ENCODE measurements at regions of chr11 and their contacts with region 1.

Region 1: DNA sequence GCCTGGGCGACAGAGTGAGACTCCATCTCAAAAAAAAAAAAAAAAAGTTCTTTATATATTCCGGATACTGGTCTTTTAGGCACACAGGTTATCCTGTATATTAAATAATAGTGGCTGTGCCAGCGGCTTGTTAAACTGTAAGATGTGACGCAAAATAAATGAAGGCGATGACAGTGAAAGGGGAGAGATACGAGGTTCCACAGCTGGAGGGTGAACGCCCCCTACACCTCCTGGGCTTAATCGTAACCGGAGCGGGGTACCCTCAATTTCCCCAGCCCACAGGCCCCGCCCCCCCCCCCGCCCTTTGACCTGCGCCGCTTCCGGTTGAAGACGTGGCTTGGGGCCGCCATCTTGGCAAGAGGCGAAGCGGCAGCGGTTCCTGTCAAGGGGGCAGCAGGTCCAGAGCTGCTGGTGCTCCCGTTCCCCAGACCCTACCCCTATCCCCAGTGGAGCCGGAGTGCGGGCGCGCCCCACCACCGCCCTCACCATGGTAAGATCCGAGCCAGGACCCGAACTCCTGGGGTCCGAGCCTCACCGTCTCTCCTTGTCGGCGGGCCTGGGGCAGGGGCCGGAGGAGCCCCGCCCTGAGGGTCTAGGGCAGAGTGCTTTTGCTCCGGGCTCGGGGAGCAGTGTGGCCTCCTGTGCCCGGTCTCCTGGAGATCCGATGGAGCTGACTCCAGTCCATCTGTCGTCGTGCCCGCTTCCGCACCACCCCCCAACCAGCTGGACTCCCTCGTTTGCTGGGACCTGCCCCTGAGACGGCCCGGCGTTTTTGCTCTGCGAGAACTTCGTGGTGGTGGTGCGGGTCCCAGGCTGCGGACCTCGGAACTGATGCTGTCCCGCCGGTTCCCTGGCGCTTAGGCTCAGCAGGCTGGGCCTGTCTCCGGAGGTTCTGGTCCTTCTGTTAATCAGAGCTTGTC is at the start of gene ARCN1:
- DNase-seq: peak; percentile 58 to 82 (median 79)
- ATAC-seq: peak; percentile 94
- H3K4me3 ChIP-seq: peak within 1 kb of the TSS; percentile 98
- H3K4me3 Mint-ChIP-seq: peak within 1 kb of the TSS; percentile 83 to 99 (median 96)
- H3K27ac ChIP-seq: peak within 1 kb of the TSS; percentile 100
- H3K27ac Mint-ChIP-seq: peak within 1 kb of the TSS; percentile 92 to 98 (median 98)
- H3K4me1 ChIP-seq: peaks cover 26 to 36% of the 10 kb centered on the region in 2 donors
- H3K4me1 Mint-ChIP-seq: peaks cover 35 to 58% (median 50%) of the 10 kb centered on the region in 7 donors
- H3K27me3 ChIP-seq: no peaks in the 10 kb centered on the region
- H3K27me3 Mint-ChIP-seq: no peaks in the 10 kb centered on the region
- total RNA-seq, gene ARCN1: 71.2 to 134 (median 115) TPM

Region 2: DNA sequence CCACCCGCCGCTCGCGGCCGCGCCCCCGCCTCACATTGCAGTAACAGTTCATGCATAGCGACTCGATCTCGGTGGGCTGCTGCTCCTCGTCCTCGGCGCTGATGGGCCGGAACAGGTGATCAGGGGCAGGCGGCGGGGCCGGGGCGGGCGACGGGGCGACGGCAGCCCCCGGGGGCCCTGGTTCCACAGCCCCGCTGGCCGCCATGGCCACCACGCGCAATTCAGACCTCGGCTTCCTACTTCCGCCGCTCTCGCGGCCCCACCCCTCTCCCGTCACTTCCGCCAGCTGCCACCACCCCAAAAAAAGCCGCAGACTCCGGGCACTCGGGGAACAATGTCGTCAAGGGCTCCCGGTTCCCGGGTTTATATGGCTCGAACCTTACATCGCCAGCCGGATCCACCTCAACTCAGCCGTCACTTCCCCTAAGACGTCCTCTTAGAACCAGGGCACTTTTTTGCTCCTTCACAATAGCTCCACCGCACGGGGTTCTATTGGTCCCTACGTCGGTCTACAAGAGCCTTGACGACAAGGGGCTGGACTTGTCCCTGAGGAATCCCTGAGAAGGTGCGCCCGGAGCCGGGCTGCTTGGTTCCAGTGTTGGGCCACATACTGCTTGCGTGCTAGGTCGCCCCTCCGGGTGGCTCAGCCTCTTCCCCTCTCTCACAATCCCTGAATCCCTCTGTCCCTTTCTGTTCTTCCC is 1784.4 kb before region 1 on chr11 and contains the start of gene ZPR1:
- CTCF ChIA-PET with region 1: no interaction called
- POLR2A ChIA-PET with region 1: no interaction called
- intact Hi-C with region 1: no loop called
- DNase-seq: peak; percentile 75 to 88 (median 87)
- ATAC-seq: peak; percentile 92
- H3K4me3 ChIP-seq: peak within 1 kb of the TSS; percentile 79
- H3K4me3 Mint-ChIP-seq: peak within 1 kb of the TSS; percentile 85 to 98 (median 92)
- H3K27ac ChIP-seq: peak within 1 kb of the TSS; percentile 95
- H3K27ac Mint-ChIP-seq: peak within 1 kb of the TSS; percentile 80 to 98 (median 96)
- H3K4me1 ChIP-seq: peaks cover 17 to 24% of the 10 kb centered on the region in 2 donors
- H3K4me1 Mint-ChIP-seq: peaks cover 32 to 57% (median 44%) of the 10 kb centered on the region in 7 donors
- H3K27me3 ChIP-seq: no peaks in the 10 kb centered on the region
- H3K27me3 Mint-ChIP-seq: no peaks in the 10 kb centered on the region
- total RNA-seq, gene ZPR1: 65.8 to 117 (median 68.8) TPM

Region 3: DNA sequence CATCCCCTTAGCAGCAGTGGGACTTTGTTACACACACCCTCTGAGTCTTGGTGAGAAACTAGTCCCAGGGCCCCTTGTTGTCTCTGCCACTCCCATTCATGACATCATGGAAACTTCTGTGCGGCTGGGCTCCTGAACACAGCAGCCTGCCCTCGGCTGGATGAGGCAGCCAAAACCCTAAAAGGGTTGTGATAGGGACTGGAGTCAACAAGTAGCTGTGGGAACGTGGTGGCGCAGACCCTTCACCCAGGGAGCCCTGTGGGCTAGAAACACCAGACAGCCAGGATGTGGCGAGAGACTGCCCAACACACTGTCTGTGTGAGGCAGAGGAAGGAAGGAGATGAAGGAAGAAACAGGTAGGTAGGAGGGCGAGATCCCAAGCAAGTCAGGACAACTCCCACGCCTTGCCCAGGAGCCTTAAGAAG is 233.7 kb before region 1 on chr11:
- CTCF ChIA-PET with region 1: no interaction called
- POLR2A ChIA-PET with region 1: interaction called, 4 read pairs
- intact Hi-C with region 1: loop called in 1 of 2 experiments (anchors 5 kb)
- DNase-seq: peak; percentile 46 to 99 (median 92)
- ATAC-seq: peak; percentile 82
- H3K4me3 ChIP-seq: peak overlapping the region; percentile 88
- H3K4me3 Mint-ChIP-seq: peak overlapping the region; percentile 89 to 98 (median 96)
- H3K27ac ChIP-seq: peak overlapping the region; percentile 96
- H3K27ac Mint-ChIP-seq: peak overlapping the region; percentile 95 to 100 (median 99)
- H3K4me1 ChIP-seq: peaks cover 46 to 50% of the 10 kb centered on the region in 2 donors
- H3K4me1 Mint-ChIP-seq: peaks cover 28 to 68% (median 55%) of the 10 kb centered on the region in 7 donors
- H3K27me3 ChIP-seq: no peaks in the 10 kb centered on the region
- H3K27me3 Mint-ChIP-seq: no peaks in the 10 kb centered on the region

Region 4: DNA sequence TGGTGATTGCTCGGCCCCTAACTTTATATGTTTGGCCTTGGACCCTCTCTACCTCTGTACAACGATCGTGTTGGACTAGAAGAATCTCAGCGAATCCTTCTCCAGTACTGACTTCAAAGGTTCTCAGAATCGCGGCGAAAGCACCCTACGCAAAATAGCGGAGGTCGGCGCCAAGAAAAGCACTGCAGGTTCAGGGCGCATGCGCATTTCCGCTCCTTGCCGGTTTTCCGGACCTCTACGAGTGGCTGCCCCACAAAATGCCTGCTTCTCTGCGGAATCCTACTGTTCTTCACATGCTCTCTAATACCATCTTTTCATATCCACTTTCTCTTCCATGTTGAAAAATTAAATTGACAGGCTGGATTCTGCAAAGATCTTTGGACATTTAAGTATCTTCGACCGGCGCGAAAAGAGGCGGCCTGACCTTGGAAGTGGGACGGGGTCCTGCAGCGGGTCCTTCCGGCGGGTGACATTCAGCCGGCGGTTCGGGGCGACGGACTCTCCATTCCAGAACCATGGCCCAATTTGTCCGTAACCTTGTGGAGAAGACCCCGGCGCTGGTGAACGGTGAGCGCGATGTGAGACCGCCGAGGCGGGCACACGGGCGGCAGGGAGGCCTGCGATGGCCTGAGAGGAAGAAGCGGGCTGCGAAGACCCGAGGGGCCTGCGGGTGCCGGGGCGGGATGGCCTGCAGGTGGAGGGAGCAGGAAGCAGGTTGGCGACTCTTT is 171.0 kb before region 1 on chr11 and contains the start of gene ATP5MG:
- CTCF ChIA-PET with region 1: no interaction called
- POLR2A ChIA-PET with region 1: no interaction called
- intact Hi-C with region 1: loop called (anchors 2 kb)
- DNase-seq: peak; percentile 83 to 96 (median 93)
- ATAC-seq: peak; percentile 71
- H3K4me3 ChIP-seq: peak within 1 kb of the TSS; percentile 79
- H3K4me3 Mint-ChIP-seq: peak within 1 kb of the TSS; percentile 97 to 99 (median 98)
- H3K27ac ChIP-seq: peak within 1 kb of the TSS; percentile 97
- H3K27ac Mint-ChIP-seq: peak within 1 kb of the TSS; percentile 97 to 100 (median 100)
- H3K4me1 ChIP-seq: peaks cover 37 to 58% of the 10 kb centered on the region in 2 donors
- H3K4me1 Mint-ChIP-seq: peaks cover 39 to 78% (median 71%) of the 10 kb centered on the region in 7 donors
- H3K27me3 ChIP-seq: no peaks in the 10 kb centered on the region
- H3K27me3 Mint-ChIP-seq: peaks cover 0 to 2% (median 0%) of the 10 kb centered on the region in 5 donors
- total RNA-seq, gene ATP5MG: 140 to 241 (median 154) TPM

Region 5: DNA sequence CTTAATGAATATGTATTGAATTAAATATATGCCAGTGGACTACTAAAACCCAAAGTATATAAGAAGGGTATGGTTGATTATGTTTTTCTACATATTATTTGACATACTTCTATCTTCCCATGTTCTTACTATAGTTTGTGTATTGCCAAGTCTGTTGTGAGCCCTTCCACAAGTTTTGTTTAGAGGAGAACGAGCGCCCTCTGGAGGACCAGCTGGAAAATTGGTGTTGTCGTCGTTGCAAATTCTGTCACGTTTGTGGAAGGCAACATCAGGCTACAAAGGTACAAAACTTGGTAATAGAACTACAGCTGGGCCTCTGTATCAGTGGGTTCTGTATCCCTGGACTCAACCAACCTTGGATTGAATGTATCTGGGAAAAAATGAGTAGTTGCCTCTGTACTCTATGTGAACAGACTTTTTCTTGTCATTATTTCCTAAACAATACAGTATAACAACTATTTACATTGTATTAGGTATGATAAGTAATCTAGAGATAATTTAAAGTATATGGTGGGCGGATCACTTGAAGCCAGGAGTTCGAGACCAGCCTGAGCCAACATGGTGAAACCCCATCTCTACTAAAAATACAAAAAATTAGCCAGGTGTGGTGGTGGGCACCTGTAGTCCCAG is 83.7 kb before region 1 on chr11:
- CTCF ChIA-PET with region 1: no interaction called
- POLR2A ChIA-PET with region 1: no interaction called
- intact Hi-C with region 1: loop called in 1 of 2 experiments (anchors 2 kb)
- DNase-seq: peak; percentile 66 to 86 (median 80)
- ATAC-seq: peak; percentile 89
- H3K4me3 ChIP-seq: no peak overlapping the region
- H3K4me3 Mint-ChIP-seq: no peak overlapping the region
- H3K27ac ChIP-seq: peak overlapping the region; percentile 53
- H3K27ac Mint-ChIP-seq: peak overlapping the region in 7 of 9 donors; percentile 10 to 89 (median 57)
- H3K4me1 ChIP-seq: no peaks in the 10 kb centered on the region
- H3K4me1 Mint-ChIP-seq: peaks cover 0 to 12% (median 5%) of the 10 kb centered on the region in 7 donors
- H3K27me3 ChIP-seq: no peaks in the 10 kb centered on the region
- H3K27me3 Mint-ChIP-seq: no peaks in the 10 kb centered on the region

Region 6: GRCh38 chr11:118514103-118514502 is 58.2 kb before region 1 on chr11:
- CTCF ChIA-PET with region 1: no interaction called
- POLR2A ChIA-PET with region 1: no interaction called
- intact Hi-C with region 1: loop called in 1 of 2 experiments (anchors 2 kb)
- DNase-seq: peak in 1 of 9 donors; percentile 17
- ATAC-seq: peak; percentile 48
- H3K4me3 ChIP-seq: no peak overlapping the region
- H3K4me3 Mint-ChIP-seq: peak overlapping the region in 8 of 10 donors; percentile 7 to 59 (median 30)
- H3K27ac ChIP-seq: peak overlapping the region; percentile 55
- H3K27ac Mint-ChIP-seq: peak overlapping the region; percentile 19 to 86 (median 66)
- H3K4me1 ChIP-seq: no peaks in the 10 kb centered on the region
- H3K4me1 Mint-ChIP-seq: peaks cover 6 to 21% (median 14%) of the 10 kb centered on the region in 7 donors
- H3K27me3 ChIP-seq: no peaks in the 10 kb centered on the region
- H3K27me3 Mint-ChIP-seq: no peaks in the 10 kb centered on the region

Region 7: GRCh38 chr11:118530408-118531339 is 41.6 kb before region 1 on chr11 and contains the start of gene TMEM25:
- CTCF ChIA-PET with region 1: no interaction called
- POLR2A ChIA-PET with region 1: interaction called, 4 read pairs
- intact Hi-C with region 1: loop called in 1 of 2 experiments (anchors 1 kb)
- DNase-seq: peak; percentile 55 to 82 (median 73)
- ATAC-seq: peak; percentile 90
- H3K4me3 ChIP-seq: peak within 1 kb of the TSS; percentile 83
- H3K4me3 Mint-ChIP-seq: peak within 1 kb of the TSS; percentile 92 to 99 (median 94)
- H3K27ac ChIP-seq: peak within 1 kb of the TSS; percentile 83
- H3K27ac Mint-ChIP-seq: peak within 1 kb of the TSS; percentile 82 to 96 (median 91)
- H3K4me1 ChIP-seq: peaks cover 13 to 14% of the 10 kb centered on the region in 2 donors
- H3K4me1 Mint-ChIP-seq: peaks cover 24 to 51% (median 45%) of the 10 kb centered on the region in 7 donors
- H3K27me3 ChIP-seq: no peaks in the 10 kb centered on the region
- H3K27me3 Mint-ChIP-seq: peaks cover 0 to 3% (median 0%) of the 10 kb centered on the region in 5 donors
- total RNA-seq, gene TMEM25: 12.1 to 32.8 (median 27.6) TPM

Region 8: GRCh38 chr11:118997627-118998387 is 425.5 kb after region 1 on chr11 and contains the start of gene CENATAC:
- CTCF ChIA-PET with region 1: no interaction called
- POLR2A ChIA-PET with region 1: interaction called, 5 read pairs
- intact Hi-C with region 1: loop called (anchors 2 to 5 kb)
- DNase-seq: peak; percentile 91 to 98 (median 94)
- ATAC-seq: peak; percentile 98
- H3K4me3 ChIP-seq: peak within 1 kb of the TSS; percentile 91
- H3K4me3 Mint-ChIP-seq: peak within 1 kb of the TSS; percentile 87 to 99 (median 94)
- H3K27ac ChIP-seq: peak within 1 kb of the TSS; percentile 85
- H3K27ac Mint-ChIP-seq: peak within 1 kb of the TSS; percentile 87 to 98 (median 92)
- H3K4me1 ChIP-seq: peaks cover 6 to 16% of the 10 kb centered on the region in 2 donors
- H3K4me1 Mint-ChIP-seq: peaks cover 26 to 45% (median 37%) of the 10 kb centered on the region in 7 donors
- H3K27me3 ChIP-seq: no peaks in the 10 kb centered on the region
- H3K27me3 Mint-ChIP-seq: no peaks in the 10 kb centered on the region
- total RNA-seq, gene CENATAC: 53.5 to 136 (median 109) TPM

Measured in naive thymus-derived CD4-positive, alpha-beta T cell (primary cell).